ENCODE measurements at regions of chr15 and their contacts with region 1.

Region 1: GRCh38 chr15:89874926-89875564 is 18.7 kb downstream of the AP3S2 start:
- DNase-seq: peak; percentile 91
- ATAC-seq: peak; percentile 97

Region 2: GRCh38 chr15:89749951-89750559 is 125.0 kb before region 1 on chr15:
- intact Hi-C with region 1: loop called (anchors 5 kb)
- DNase-seq: no peak
- ATAC-seq: peak; percentile 32

Region 3: GRCh38 chr15:89760303-89761008 is 114.6 kb before region 1 on chr15:
- intact Hi-C with region 1: loop called (anchors 5 kb)
- DNase-seq: peak; percentile 92
- ATAC-seq: peak; percentile 92